Dorsolateral prefrontal cortex (tissue), 120 donors: ENCODE measurements at regions of chr19 and their contacts with region 1.

Region 1: GRCh38 chr19:7680606-7681339 is at the start of gene TRAPPC5:
- DNase-seq: peak; percentile 74 to 92 (median 82)
- H3K4me3 ChIP-seq: peak within 1 kb of the TSS; percentile 71 to 100 (median 98)
- H3K27ac ChIP-seq: peak within 1 kb of the TSS in 57 of 59 donors; percentile 35 to 98 (median 87)
- H3K27me3 ChIP-seq: peaks cover 0 to 8% (median 0%) of the 10 kb centered on the region in 45 donors
- CTCF ChIP-seq: peak; percentile 76 to 100 (median 97)
- total RNA-seq, gene TRAPPC5: 59.2 to 143 (median 100) TPM

Region 2: GRCh38 chr19:7104747-7105447 is 575.9 kb before region 1 on chr19:
- intact Hi-C with region 1: loop called in 1 of 2 experiments (anchors 5 kb)
- DNase-seq: peak in 1 of 10 donors; percentile 24
- H3K4me3 ChIP-seq: no peak overlapping the region
- H3K27ac ChIP-seq: no peak overlapping the region
- H3K27me3 ChIP-seq: no peaks in the 10 kb centered on the region
- CTCF ChIP-seq: no peak

Region 3: DNA sequence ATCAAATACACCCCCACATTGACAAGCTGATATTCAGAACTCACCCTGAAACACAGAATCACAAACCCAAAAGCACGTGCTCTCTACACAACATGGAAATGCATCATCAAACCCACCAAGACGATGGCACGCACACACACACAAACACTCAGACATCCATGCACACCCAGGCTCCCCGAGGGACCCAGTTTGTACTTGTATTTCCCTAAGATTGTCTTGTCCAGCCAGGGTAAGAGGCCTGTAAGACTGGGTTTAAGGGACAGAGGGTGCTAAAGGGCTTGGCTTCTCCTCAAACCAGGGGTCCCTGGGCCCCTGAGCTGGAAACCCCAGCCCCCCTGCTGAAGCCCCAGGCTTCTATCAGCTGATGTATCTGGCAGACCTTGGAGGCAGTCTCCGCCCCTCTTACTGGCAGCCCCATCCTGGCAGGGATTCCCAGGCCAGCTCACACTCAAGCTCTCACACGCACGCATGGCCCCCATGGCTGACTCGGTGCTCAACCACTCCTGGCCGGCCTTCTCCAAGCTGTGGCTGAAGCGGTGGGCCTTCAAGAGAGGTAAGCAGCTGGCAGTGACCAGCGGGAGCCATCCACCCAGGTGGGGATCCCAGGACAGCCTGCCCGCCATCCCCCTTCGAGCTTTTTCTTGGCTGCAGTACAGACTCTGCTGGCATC is 325.5 kb before region 1 on chr19:
- intact Hi-C with region 1: loop called (anchors 2 to 10 kb)
- DNase-seq: no peak
- H3K4me3 ChIP-seq: no peak overlapping the region
- H3K27ac ChIP-seq: no peak overlapping the region
- H3K27me3 ChIP-seq: no peaks in the 10 kb centered on the region
- CTCF ChIP-seq: no peak

Region 4: GRCh38 chr19:7629347-7630054 is 51.3 kb before region 1 on chr19 and contains the starts of genes PET100 and XAB2:
- intact Hi-C with region 1: no loop called
- DNase-seq: peak; percentile 95 to 99 (median 98)
- H3K4me3 ChIP-seq: peak within 1 kb of the TSS; percentile 71 to 100 (median 92)
- H3K27ac ChIP-seq: peak within 1 kb of the TSS in 49 of 59 donors; percentile 15 to 90 (median 72)
- H3K27me3 ChIP-seq: no peaks in the 10 kb centered on the region
- CTCF ChIP-seq: peak in 17 of 56 donors; percentile 8 to 56 (median 25)
- total RNA-seq, gene PET100: 33.4 to 159 (median 92.2) TPM
- total RNA-seq, gene XAB2: 30.8 to 56.2 (median 38.7) TPM

Region 5: GRCh38 chr19:7652061-7652641 is 28.6 kb before region 1 on chr19:
- intact Hi-C with region 1: loop called (anchors 1 to 2 kb)
- DNase-seq: peak; percentile 65 to 85 (median 79)
- H3K4me3 ChIP-seq: peak overlapping the region in 54 of 59 donors; percentile 4 to 64 (median 44)
- H3K27ac ChIP-seq: peak overlapping the region in 4 of 59 donors; percentile 3 to 54 (median 18)
- H3K27me3 ChIP-seq: no peaks in the 10 kb centered on the region
- CTCF ChIP-seq: peak; percentile 89 to 99 (median 97)

Region 6: DNA sequence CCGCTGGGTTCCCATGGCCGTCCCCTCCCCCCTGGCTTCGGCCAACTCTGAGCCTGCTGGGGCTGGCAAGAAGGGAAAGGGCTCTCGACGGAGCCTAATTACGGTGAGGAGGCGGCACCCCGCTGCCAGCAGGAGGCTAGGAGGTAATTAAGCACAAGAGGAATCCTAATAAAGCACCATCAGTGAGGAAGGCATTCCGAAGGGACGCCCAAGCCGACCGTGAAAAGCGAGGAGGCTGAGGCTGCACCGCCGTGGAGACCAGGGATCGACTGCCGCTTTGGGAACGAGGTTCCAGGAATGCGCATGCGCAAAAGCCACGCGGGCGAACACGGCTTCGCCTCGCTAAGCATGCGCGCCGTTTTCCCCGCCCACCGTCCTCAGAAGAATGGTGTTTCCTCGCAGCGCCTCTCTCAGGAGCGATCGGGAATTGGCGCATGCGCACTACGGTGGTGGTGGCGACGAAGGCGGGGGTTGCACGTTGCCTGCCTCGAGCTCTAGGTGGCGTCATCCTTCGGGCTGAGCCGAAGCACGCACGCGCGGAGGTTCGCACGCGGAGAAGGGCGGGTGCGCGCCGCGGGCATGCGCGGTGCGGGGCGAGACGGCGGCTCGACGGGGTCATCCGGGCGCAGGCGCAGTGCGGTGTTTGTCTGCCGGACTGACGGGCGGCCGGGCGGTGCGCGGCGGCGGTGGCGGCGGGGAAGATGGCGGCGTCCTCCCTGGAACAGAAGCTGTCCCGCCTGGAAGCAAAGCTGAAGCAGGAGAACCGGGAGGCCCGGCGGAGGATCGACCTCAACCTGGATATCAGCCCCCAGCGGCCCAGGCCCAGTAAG is 222.7 kb after region 1 on chr19 and contains the start of gene MAP2K7:
- intact Hi-C with region 1: loop called in 1 of 2 experiments (anchors 10 kb)
- DNase-seq: peak; percentile 98 to 100 (median 99)
- H3K4me3 ChIP-seq: peak within 1 kb of the TSS; percentile 61 to 99 (median 88)
- H3K27ac ChIP-seq: peak within 1 kb of the TSS in 58 of 59 donors; percentile 54 to 97 (median 90)
- H3K27me3 ChIP-seq: no peaks in the 10 kb centered on the region
- CTCF ChIP-seq: peak; percentile 78 to 99 (median 94)
- total RNA-seq, gene MAP2K7: 28.0 to 51.9 (median 39.4) TPM